GM12878 (cell line): ENCODE measurements at regions of chr1 and their contacts with region 1.

Region 1: DNA sequence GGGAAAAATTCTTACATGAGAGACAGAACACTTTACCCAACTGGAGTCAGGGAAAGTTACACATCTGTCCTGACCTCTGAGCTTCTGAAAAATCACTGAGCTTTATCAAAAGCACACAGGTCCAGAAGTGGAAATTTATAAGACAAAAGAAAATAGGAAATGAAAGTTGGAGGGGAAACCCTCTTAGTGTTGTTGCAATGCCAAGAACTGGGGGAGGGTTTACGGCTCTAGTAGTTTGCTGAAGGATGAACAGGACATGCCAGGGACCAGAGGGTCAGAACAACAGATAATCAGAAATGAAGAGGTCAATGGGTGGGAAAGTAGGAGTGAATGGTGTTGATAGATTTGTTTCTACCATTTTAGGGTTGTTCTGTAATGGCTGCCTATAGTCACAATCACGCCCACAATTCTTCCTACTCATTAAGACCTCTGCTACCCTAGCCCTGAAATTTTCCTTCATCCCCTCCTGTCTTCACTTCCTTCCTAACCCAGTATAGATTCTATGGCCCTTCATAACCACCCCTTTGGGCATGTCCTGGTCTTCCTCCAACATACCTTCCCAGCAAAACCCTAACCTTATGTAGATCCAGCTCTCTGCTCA is 30.3 kb upstream of the FMOD start:
- DNase-seq: peak; percentile 70
- ATAC-seq: peak; percentile 95
- H3K4me3 ChIP-seq: peak overlapping the region; percentile 50
- H3K27ac ChIP-seq: peak overlapping the region; percentile 81
- H3K4me1 ChIP-seq: peaks cover 25% of the 10 kb centered on the region
- H3K27me3 ChIP-seq: no peaks in the 10 kb centered on the region
- CTCF ChIP-seq: no peak
- EP300 ChIP-seq: peak in 1 of 2 experiments; percentile 86; a peak in 3 of 4 replicates
- POLR2A ChIP-seq: no peak
- RAD21 ChIP-seq: no peak

Region 2: GRCh38 chr1:203186446-203187303 is 194.6 kb before region 1 on chr1 and contains the start of gene CHI3L1:
- CTCF ChIA-PET with region 1: no interaction called
- POLR2A ChIA-PET with region 1: no interaction called
- RAD21 ChIA-PET with region 1: no interaction called
- SMC1A ChIA-PET with region 1: no interaction called
- in situ Hi-C with region 1: no loop called
- intact Hi-C with region 1: no loop called
- DNase-seq: no peak
- ATAC-seq: no peak
- H3K4me3 ChIP-seq: no peak within 1 kb of the TSS
- H3K27ac ChIP-seq: no peak within 1 kb of the TSS
- H3K4me1 ChIP-seq: no peaks in the 10 kb centered on the region
- H3K27me3 ChIP-seq: no peaks in the 10 kb centered on the region; a peak in 1 of 4 replicates
- CTCF ChIP-seq: no peak
- EP300 ChIP-seq: no peak
- POLR2A ChIP-seq: no peak
- RAD21 ChIP-seq: no peak
- polyA plus RNA-seq, gene CHI3L1: 0.10 to 0.26 TPM

Region 3: GRCh38 chr1:203326830-203327683 is 54.2 kb before region 1 on chr1:
- CTCF ChIA-PET with region 1: no interaction called
- POLR2A ChIA-PET with region 1: interaction called, 4 read pairs
- RAD21 ChIA-PET with region 1: interaction called, 12 read pairs
- SMC1A ChIA-PET with region 1: interaction called, 11 read pairs
- in situ Hi-C with region 1: no loop called
- intact Hi-C with region 1: no loop called
- DNase-seq: peak; percentile 88
- ATAC-seq: peak; percentile 81
- H3K4me3 ChIP-seq: peak overlapping the region; percentile 60
- H3K27ac ChIP-seq: peak overlapping the region; percentile 98
- H3K4me1 ChIP-seq: peaks cover 62% of the 10 kb centered on the region
- H3K27me3 ChIP-seq: no peaks in the 10 kb centered on the region
- CTCF ChIP-seq: peak in 2 of 3 experiments; percentile 12 to 22; a peak in 1 of 6 replicates
- EP300 ChIP-seq: peak; percentile 62 to 85; a peak in 3 of 4 replicates
- POLR2A ChIP-seq: peak; percentile 78
- RAD21 ChIP-seq: no peak

Region 4: GRCh38 chr1:203361945-203362719 is 19.1 kb before region 1 on chr1:
- CTCF ChIA-PET with region 1: interaction called, 6 read pairs
- POLR2A ChIA-PET with region 1: interaction called, 5 read pairs
- RAD21 ChIA-PET with region 1: interaction called, 7 read pairs
- SMC1A ChIA-PET with region 1: interaction called, 10 read pairs
- in situ Hi-C with region 1: no loop called
- intact Hi-C with region 1: no loop called
- DNase-seq: no peak
- ATAC-seq: peak; percentile 91
- H3K4me3 ChIP-seq: no peak overlapping the region
- H3K27ac ChIP-seq: no peak overlapping the region
- H3K4me1 ChIP-seq: no peaks in the 10 kb centered on the region
- H3K27me3 ChIP-seq: peaks cover 0 to 5% of the 10 kb centered on the region in 2 experiments; a peak in 3 of 4 replicates
- CTCF ChIP-seq: no peak
- EP300 ChIP-seq: no peak
- POLR2A ChIP-seq: no peak
- RAD21 ChIP-seq: no peak

Region 5: GRCh38 chr1:203368624-203369451 is 12.4 kb before region 1 on chr1:
- CTCF ChIA-PET with region 1: interaction called, 4 read pairs
- POLR2A ChIA-PET with region 1: interaction called, 5 read pairs
- RAD21 ChIA-PET with region 1: interaction called, 7 read pairs
- SMC1A ChIA-PET with region 1: interaction called, 10 read pairs
- in situ Hi-C with region 1: no loop called
- intact Hi-C with region 1: no loop called
- DNase-seq: no peak
- ATAC-seq: no peak
- H3K4me3 ChIP-seq: no peak overlapping the region
- H3K27ac ChIP-seq: no peak overlapping the region
- H3K4me1 ChIP-seq: no peaks in the 10 kb centered on the region
- H3K27me3 ChIP-seq: no peaks in the 10 kb centered on the region; a peak in 1 of 4 replicates
- CTCF ChIP-seq: peak in 2 of 3 experiments; percentile 13 to 25; a peak in 3 of 6 replicates
- EP300 ChIP-seq: no peak
- POLR2A ChIP-seq: no peak
- RAD21 ChIP-seq: peak; percentile 69

Region 6: DNA sequence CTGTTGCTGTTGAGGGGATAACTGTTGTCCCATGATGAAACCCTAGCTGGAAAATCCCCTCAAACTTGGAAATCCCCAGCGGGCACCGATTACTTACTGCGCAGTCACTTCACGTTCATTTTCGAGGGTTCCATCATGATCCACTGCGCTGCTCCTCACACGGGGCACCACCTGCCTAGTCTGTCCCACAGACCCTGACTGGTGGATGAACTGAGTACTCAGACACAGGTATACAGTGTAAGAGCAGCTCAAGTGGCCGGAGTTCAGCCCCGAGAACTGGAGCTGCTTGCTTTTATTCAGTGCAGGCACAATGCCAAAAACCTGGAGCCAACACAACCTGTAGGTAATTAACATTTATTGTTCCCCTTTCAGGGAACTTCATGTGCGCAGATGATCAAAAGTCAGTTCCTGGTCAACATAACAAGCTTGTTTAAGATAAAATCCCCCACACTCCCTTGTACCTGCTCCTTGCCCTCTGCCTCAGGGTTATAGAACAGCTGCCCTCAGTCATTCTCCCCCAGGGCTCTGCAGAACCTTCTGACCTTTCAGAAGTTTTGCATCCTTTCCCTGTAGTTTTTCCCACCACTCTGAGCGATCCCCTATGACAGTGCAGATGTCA is 47.8 kb after region 1 on chr1:
- CTCF ChIA-PET with region 1: interaction called, 7 read pairs
- POLR2A ChIA-PET with region 1: interaction called, 26 read pairs
- RAD21 ChIA-PET with region 1: interaction called, 39 read pairs
- SMC1A ChIA-PET with region 1: interaction called, 33 read pairs
- in situ Hi-C with region 1: no loop called
- intact Hi-C with region 1: loop called (anchors 1 kb)
- DNase-seq: peak; percentile 70
- ATAC-seq: peak; percentile 97
- H3K4me3 ChIP-seq: no peak overlapping the region
- H3K27ac ChIP-seq: peak overlapping the region; percentile 70
- H3K4me1 ChIP-seq: peaks cover 13% of the 10 kb centered on the region
- H3K27me3 ChIP-seq: no peaks in the 10 kb centered on the region
- CTCF ChIP-seq: no peak
- EP300 ChIP-seq: peak in 1 of 2 experiments; percentile 48; a peak in 1 of 4 replicates
- POLR2A ChIP-seq: 0 out of 2 replicates have a peak, but pooled peaks have one; percentile 22
- RAD21 ChIP-seq: no peak

Region 7: GRCh38 chr1:203440771-203441170 is 59.5 kb after region 1 on chr1:
- CTCF ChIA-PET with region 1: interaction called, 13 read pairs
- POLR2A ChIA-PET with region 1: interaction called, 5 read pairs
- RAD21 ChIA-PET with region 1: interaction called, 28 read pairs
- SMC1A ChIA-PET with region 1: interaction called, 25 read pairs
- in situ Hi-C with region 1: no loop called
- intact Hi-C with region 1: no loop called
- DNase-seq: no peak
- ATAC-seq: peak; percentile 95
- H3K4me3 ChIP-seq: no peak overlapping the region
- H3K27ac ChIP-seq: no peak overlapping the region
- H3K4me1 ChIP-seq: no peaks in the 10 kb centered on the region
- H3K27me3 ChIP-seq: peaks cover 0 to 3% of the 10 kb centered on the region in 2 experiments; a peak in 2 of 4 replicates
- CTCF ChIP-seq: peak; percentile 31 to 77 (median 52); a peak in 4 of 6 replicates
- EP300 ChIP-seq: no peak
- POLR2A ChIP-seq: no peak
- RAD21 ChIP-seq: peak; percentile 82

Region 8: GRCh38 chr1:203475012-203475981 is 94.0 kb after region 1 on chr1 and contains the start of gene PRELP:
- CTCF ChIA-PET with region 1: interaction called, 5 read pairs
- POLR2A ChIA-PET with region 1: no interaction called
- RAD21 ChIA-PET with region 1: interaction called, 13 read pairs
- SMC1A ChIA-PET with region 1: interaction called, 10 read pairs
- in situ Hi-C with region 1: no loop called
- intact Hi-C with region 1: no loop called
- DNase-seq: no peak
- ATAC-seq: no peak
- H3K4me3 ChIP-seq: no peak within 1 kb of the TSS
- H3K27ac ChIP-seq: no peak within 1 kb of the TSS
- H3K4me1 ChIP-seq: peaks cover 9% of the 10 kb centered on the region; the same call in 1 of the 2 replicates
- H3K27me3 ChIP-seq: peaks cover 2 to 6% of the 10 kb centered on the region in 2 experiments; a peak in 2 of 4 replicates
- CTCF ChIP-seq: no peak
- EP300 ChIP-seq: no peak
- POLR2A ChIP-seq: no peak
- RAD21 ChIP-seq: no peak
- polyA plus RNA-seq, gene PRELP: not detected

Region 9: DNA sequence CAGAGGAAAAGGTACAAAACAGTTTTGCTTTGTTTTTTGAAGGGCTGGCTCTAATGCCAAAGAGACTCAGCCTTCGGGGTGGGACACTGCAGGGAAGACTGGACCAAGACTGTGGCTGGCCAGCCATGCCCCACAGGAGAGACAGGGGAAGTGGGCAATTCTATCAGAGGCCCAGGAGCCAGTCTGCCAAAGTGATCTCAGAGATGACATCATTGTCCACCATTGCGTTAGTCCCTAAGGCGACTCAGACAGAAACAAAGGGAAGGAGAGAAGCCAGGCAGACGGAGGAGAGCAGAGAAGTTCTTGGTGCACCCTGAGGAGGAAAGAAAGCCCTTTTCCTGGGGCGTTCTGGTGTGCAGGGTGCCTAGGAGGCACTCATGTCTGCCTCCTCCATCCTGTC is 139.1 kb after region 1 on chr1:
- CTCF ChIA-PET with region 1: no interaction called
- POLR2A ChIA-PET with region 1: no interaction called
- RAD21 ChIA-PET with region 1: no interaction called
- SMC1A ChIA-PET with region 1: no interaction called
- in situ Hi-C with region 1: no loop called
- intact Hi-C with region 1: no loop called
- DNase-seq: no peak
- ATAC-seq: no peak
- H3K4me3 ChIP-seq: no peak overlapping the region
- H3K27ac ChIP-seq: no peak overlapping the region
- H3K4me1 ChIP-seq: no peaks in the 10 kb centered on the region
- H3K27me3 ChIP-seq: no peaks in the 10 kb centered on the region; a peak in 1 of 4 replicates
- CTCF ChIP-seq: no peak
- EP300 ChIP-seq: no peak
- POLR2A ChIP-seq: no peak
- RAD21 ChIP-seq: no peak

Region 10: DNA sequence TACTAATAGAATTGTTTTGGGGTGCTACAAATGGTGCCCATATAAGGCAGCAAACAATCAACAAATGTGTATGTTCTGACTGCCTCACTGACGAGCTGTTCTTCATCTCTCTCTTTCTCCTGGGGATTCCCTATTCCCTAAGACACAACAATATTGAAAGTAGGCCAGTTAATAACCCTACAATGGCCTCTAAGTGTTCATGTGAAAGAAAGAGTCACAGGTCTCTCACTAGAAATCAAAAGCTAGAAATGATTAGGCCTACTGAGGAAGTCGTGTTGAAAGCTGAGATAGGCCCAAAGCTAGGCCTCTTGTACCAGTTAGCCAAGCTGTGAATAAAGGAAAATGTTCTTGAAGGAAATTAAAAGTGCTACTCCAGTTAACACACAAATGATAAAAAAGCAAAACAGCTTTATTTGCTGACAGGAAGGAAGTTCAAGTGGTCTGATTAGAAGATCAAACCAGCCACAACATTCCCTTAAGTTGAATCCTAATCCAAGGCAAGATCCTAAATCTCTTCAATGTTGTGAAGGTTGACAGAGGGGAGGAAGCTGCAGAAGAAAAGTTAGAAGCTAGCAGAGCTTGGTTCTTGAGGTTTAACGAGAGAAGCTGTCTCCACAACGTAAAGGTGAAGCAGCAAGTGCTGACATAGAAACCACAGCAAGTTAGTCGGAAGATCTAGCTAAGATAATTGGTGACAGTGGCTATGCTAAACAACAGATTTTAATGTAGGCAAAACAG is 271.6 kb after region 1 on chr1:
- CTCF ChIA-PET with region 1: no interaction called
- POLR2A ChIA-PET with region 1: no interaction called
- RAD21 ChIA-PET with region 1: no interaction called
- SMC1A ChIA-PET with region 1: no interaction called
- in situ Hi-C with region 1: no loop called
- intact Hi-C with region 1: no loop called
- DNase-seq: peak; percentile 49
- ATAC-seq: peak; percentile 50
- H3K4me3 ChIP-seq: no peak overlapping the region
- H3K27ac ChIP-seq: peak overlapping the region; percentile 63
- H3K4me1 ChIP-seq: peaks cover 37% of the 10 kb centered on the region
- H3K27me3 ChIP-seq: no peaks in the 10 kb centered on the region
- CTCF ChIP-seq: no peak
- EP300 ChIP-seq: peak; percentile 33 to 49; a peak in 2 of 4 replicates
- POLR2A ChIP-seq: no peak
- RAD21 ChIP-seq: no peak